A549 (cell line): ENCODE measurements at regions of chr11 and their contacts with region 1.

Region 1: GRCh38 chr11:10540923-10541560 is at the start of gene RNF141:
- DNase-seq: peak; percentile 84 to 92
- ATAC-seq: peak; percentile 95 to 97
- H3K4me3 ChIP-seq: peak within 1 kb of the TSS; percentile 75
- H3K27ac ChIP-seq: peak within 1 kb of the TSS; percentile 85 to 87
- H3K4me1 ChIP-seq: peaks cover 15% of the 10 kb centered on the region
- CTCF ChIP-seq: peak; percentile 74
- EP300 ChIP-seq: no peak
- POLR2A ChIP-seq: peak; percentile 97
- RAD21 ChIP-seq: peak; percentile 37 to 56; a peak in 4 of 5 replicates
- polyA plus RNA-seq, gene RNF141: 21.6 and 33.3 TPM in 2 replicates

Region 2: GRCh38 chr11:10019906-10020682 is 520.9 kb before region 1 on chr11:
- CTCF ChIA-PET with region 1: no interaction called
- POLR2A ChIA-PET with region 1: no interaction called
- DNase-seq: no peak
- ATAC-seq: no peak
- H3K4me3 ChIP-seq: no peak overlapping the region
- H3K27ac ChIP-seq: no peak overlapping the region
- H3K4me1 ChIP-seq: peaks cover 4% of the 10 kb centered on the region; the same call in 1 of the 3 replicates
- CTCF ChIP-seq: no peak
- EP300 ChIP-seq: no peak
- POLR2A ChIP-seq: no peak
- RAD21 ChIP-seq: no peak

Region 3: GRCh38 chr11:10519630-10520029 is 21.4 kb before region 1 on chr11:
- CTCF ChIA-PET with region 1: interaction called, 10 read pairs
- POLR2A ChIA-PET with region 1: no interaction called
- DNase-seq: no peak
- ATAC-seq: no peak
- H3K4me3 ChIP-seq: no peak overlapping the region
- H3K27ac ChIP-seq: no peak overlapping the region
- H3K4me1 ChIP-seq: peaks cover 2% of the 10 kb centered on the region; the same call in 2 of the 3 replicates
- CTCF ChIP-seq: no peak
- EP300 ChIP-seq: no peak
- POLR2A ChIP-seq: no peak
- RAD21 ChIP-seq: no peak

Region 4: DNA sequence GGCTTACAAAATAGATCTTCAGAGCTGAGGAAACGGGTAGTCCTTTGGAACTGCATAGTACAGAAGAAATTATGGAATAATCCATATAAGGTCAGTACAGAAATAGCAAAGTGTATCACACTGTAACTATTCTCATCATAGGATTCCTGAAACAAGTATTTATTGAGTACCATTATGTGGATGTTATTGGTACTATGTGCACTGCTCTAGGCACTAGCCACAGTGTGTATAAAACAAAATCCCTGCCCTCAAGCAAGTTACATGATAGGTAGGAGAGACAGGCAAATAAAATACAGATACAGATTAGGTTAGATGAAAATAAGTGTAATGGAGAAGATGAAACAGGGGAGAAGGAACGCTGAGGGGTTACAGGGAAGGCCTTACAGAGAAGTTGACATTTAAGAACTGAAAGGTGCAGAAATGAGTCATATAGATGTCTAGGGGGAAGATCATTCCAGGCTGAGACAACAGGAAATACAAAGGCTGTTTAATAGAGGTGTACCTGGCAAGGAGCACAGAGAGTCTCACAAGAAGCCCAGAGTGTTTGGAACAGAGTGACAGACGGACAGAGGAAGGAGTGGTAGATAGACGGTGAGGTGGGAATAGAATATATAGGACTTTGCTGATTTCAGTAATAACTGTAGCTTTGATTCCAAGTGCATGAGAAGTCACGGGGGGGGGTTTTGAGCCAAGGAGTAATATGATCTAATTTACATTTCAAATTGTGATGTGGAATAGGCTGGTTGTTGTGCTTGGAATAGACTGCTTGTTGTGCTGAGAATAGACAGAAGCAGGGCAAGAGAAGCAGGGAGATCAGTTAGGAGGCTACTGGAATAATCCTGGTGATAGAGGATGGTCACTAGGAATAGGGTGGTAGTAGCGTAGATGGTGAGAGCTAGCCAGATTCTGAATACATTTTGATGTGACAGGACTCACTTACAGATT is 13.8 kb before region 1 on chr11:
- CTCF ChIA-PET with region 1: interaction called, 12 read pairs
- POLR2A ChIA-PET with region 1: interaction called, 12 read pairs
- DNase-seq: peak in 1 of 2 experiments; percentile 42
- ATAC-seq: peak; percentile 86 to 92
- H3K4me3 ChIP-seq: peak overlapping the region; percentile 1; the same call in 1 of the 3 replicates
- H3K27ac ChIP-seq: peak overlapping the region; percentile 60 to 84
- H3K4me1 ChIP-seq: peaks cover 43% of the 10 kb centered on the region
- CTCF ChIP-seq: no peak
- EP300 ChIP-seq: no peak
- POLR2A ChIP-seq: no peak
- RAD21 ChIP-seq: no peak

Region 5: GRCh38 chr11:10556590-10556989 is 15.5 kb after region 1 on chr11:
- CTCF ChIA-PET with region 1: interaction called, 22 read pairs
- POLR2A ChIA-PET with region 1: interaction called, 3 read pairs
- DNase-seq: no peak
- ATAC-seq: no peak
- H3K4me3 ChIP-seq: no peak overlapping the region
- H3K27ac ChIP-seq: no peak overlapping the region
- H3K4me1 ChIP-seq: peaks cover 12% of the 10 kb centered on the region
- CTCF ChIP-seq: no peak
- EP300 ChIP-seq: no peak
- POLR2A ChIP-seq: no peak
- RAD21 ChIP-seq: no peak

Region 6: GRCh38 chr11:10564696-10565318 is 23.8 kb after region 1 on chr11:
- CTCF ChIA-PET with region 1: interaction called, 22 read pairs
- POLR2A ChIA-PET with region 1: no interaction called
- DNase-seq: no peak
- ATAC-seq: peak in 1 of 2 experiments; percentile 34; a peak in 2 of 6 replicates
- H3K4me3 ChIP-seq: no peak overlapping the region
- H3K27ac ChIP-seq: no peak overlapping the region
- H3K4me1 ChIP-seq: peaks cover 14% of the 10 kb centered on the region
- CTCF ChIP-seq: peak; percentile 14; the same call in 1 of the 3 replicates
- EP300 ChIP-seq: no peak
- POLR2A ChIP-seq: no peak
- RAD21 ChIP-seq: no peak; a peak in 1 of 5 replicates

Region 7: GRCh38 chr11:10653926-10654810 is 113.1 kb after region 1 on chr11:
- CTCF ChIA-PET with region 1: interaction called, 18 read pairs
- POLR2A ChIA-PET with region 1: no interaction called
- DNase-seq: peak; percentile 35 to 72
- ATAC-seq: peak; percentile 44 to 80; a peak in 3 of 6 replicates
- H3K4me3 ChIP-seq: no peak overlapping the region
- H3K27ac ChIP-seq: peak overlapping the region; percentile 55 to 65; a peak in 4 of 6 replicates
- H3K4me1 ChIP-seq: peaks cover 44% of the 10 kb centered on the region
- CTCF ChIP-seq: peak; percentile 71
- EP300 ChIP-seq: no peak
- POLR2A ChIP-seq: no peak
- RAD21 ChIP-seq: peak; percentile 77 to 83